MCF 10A (cell line): ENCODE measurements at regions of chr9 and their contacts with region 1.

Region 1: GRCh38 chr9:125261501-125262293 is at the start of gene GAPVD1:
- DNase-seq: peak; percentile 88
- H3K4me3 Mint-ChIP-seq: peak within 1 kb of the TSS; percentile 83
- H3K27ac Mint-ChIP-seq: peak within 1 kb of the TSS; percentile 92
- H3K4me1 Mint-ChIP-seq: peaks cover 30% of the 10 kb centered on the region
- H3K27me3 Mint-ChIP-seq: no peaks in the 10 kb centered on the region
- CTCF ChIP-seq: peak; percentile 27
- total RNA-seq, gene GAPVD1: 46.2 and 53.9 TPM in 2 replicates

Region 2: DNA sequence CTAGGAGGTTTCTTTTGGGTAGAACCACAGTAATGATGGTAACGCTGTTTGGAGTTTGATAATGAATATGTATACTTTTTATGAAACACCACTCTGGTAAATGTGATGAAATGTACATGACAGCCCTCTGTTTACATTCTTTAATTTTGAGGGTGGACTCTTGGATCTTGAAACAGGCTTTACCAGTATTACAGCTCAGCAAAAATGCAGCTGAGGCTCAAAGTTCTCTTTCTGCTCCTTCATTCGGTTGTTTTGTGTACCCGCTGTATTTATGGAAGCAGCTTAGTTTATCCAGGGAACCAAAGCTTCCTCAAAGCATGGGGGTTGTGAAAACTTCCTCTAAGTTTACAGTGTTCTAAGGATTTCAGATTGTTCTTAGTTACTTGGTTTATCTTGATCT is 11.0 kb after region 1 on chr9:
- CTCF ChIA-PET with region 1: no interaction called
- POLR2A ChIA-PET with region 1: interaction called, 16 read pairs
- intact Hi-C with region 1: no loop called
- DNase-seq: no peak
- H3K4me3 Mint-ChIP-seq: no peak overlapping the region
- H3K27ac Mint-ChIP-seq: peak overlapping the region; percentile 64
- H3K4me1 Mint-ChIP-seq: peaks cover 8% of the 10 kb centered on the region
- H3K27me3 Mint-ChIP-seq: no peaks in the 10 kb centered on the region
- CTCF ChIP-seq: no peak

Region 3: GRCh38 chr9:125325831-125326230 is 64.1 kb after region 1 on chr9:
- CTCF ChIA-PET with region 1: interaction called, 5 read pairs
- POLR2A ChIA-PET with region 1: interaction called, 12 read pairs
- intact Hi-C with region 1: no loop called
- DNase-seq: peak; percentile 85
- H3K4me3 Mint-ChIP-seq: peak overlapping the region; percentile 18
- H3K27ac Mint-ChIP-seq: peak overlapping the region; percentile 23
- H3K4me1 Mint-ChIP-seq: peaks cover 22% of the 10 kb centered on the region
- H3K27me3 Mint-ChIP-seq: no peaks in the 10 kb centered on the region
- CTCF ChIP-seq: no peak

Region 4: DNA sequence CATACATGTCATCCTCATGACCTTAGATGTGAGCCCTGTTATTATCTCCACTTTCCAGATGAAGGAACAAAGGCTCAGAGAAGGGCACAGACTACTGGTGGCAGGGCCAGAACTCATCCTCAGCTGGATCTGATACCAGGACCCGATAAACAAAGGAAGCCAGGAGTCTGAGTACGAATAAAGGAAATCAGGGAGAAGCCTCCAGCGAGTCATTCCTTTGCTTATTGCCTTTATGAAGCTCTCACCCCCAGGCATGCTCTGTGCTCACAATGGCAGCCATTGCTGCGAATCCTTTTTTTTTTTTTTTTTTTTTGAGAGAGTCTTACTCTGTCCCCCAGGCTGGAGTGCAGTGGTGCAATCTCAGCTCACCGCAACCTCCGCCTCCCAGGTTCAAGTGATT is 130.0 kb after region 1 on chr9:
- CTCF ChIA-PET with region 1: no interaction called
- POLR2A ChIA-PET with region 1: no interaction called
- intact Hi-C with region 1: no loop called
- DNase-seq: no peak
- H3K4me3 Mint-ChIP-seq: no peak overlapping the region
- H3K27ac Mint-ChIP-seq: no peak overlapping the region
- H3K4me1 Mint-ChIP-seq: no peaks in the 10 kb centered on the region
- H3K27me3 Mint-ChIP-seq: no peaks in the 10 kb centered on the region
- CTCF ChIP-seq: no peak